ENCODE measurements at regions of chr18 and their contacts with region 1.

Region 1: DNA sequence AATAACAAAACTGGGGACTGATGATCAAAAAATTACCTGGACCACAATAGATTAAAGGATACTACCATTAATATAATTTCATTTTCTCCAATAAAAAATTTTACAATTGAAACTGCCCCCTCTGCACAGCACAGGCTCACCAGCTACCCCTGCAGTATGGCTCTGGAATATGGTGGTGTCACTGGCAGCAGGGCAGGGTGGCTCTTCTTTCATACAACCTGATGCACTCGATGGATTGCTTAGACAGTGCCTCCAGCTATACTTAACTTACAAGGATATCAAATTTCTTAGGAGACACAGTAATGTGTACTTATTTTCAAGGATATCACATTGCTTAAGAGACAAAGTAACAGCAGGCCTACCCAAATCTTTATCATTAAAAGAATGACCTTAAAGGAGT is 124.0 kb downstream of the PRELID3A start:
- ATAC-seq: peak in 3 of 8 experiments; percentile 27 to 76 (median 65)
- H3K4me3 ChIP-seq: no peak overlapping the region
- H3K27ac ChIP-seq: no peak overlapping the region
- H3K4me1 ChIP-seq: no peaks in the 10 kb centered on the region

Region 2: DNA sequence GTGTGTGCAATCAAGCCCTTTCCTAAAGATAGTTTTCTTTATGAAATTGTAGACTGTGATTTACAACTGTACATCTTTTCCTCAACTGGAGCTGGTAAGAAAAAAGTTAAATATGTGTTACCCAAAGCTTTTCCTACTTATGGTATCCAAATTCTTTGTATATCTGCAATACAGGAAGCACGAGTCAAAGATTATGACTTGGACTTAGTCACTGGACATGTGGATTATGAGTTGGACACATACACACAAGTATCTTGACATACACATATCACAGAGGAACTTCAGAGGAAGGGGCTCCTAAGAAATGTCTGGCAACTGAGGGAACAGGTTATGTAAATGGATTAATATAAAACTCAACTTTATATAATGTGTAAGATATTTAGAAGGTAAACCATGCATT is 88.8 kb before region 1 on chr18:
- in situ Hi-C with region 1: loop called in 1 of 9 experiments (anchors 25 kb)
- ATAC-seq: no peak
- H3K4me3 ChIP-seq: no peak overlapping the region
- H3K27ac ChIP-seq: no peak overlapping the region
- H3K4me1 ChIP-seq: no peaks in the 10 kb centered on the region